Kidney (tissue), 22 donors: ENCODE measurements at regions of chr6 and their contacts with region 1.

Region 1: DNA sequence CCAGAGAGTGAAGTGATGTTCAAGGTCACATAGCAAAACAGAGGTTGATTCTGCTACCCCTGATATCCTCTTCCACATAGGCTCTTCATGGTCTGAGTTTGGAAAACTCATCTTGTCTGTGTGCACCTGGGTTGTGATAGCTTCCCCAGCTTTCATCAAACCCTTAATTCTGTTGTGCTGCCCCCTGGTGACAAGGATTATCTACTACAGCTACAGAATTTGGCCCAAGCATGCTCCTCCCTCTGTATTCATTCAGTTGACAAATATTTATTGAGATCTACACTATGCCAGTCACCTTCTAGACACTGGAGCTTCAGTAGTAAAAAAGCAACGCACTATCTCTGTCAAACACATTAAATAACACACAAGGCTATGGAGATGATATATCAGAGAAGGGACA is 50.4 kb downstream of the SMPDL3A start:
- DNase-seq: peak in 4 of 5 donors; percentile 58 to 80 (median 64)
- H3K4me3 ChIP-seq: no peak overlapping the region
- H3K27ac ChIP-seq: no peak overlapping the region
- H3K4me1 ChIP-seq: no peaks in the 10 kb centered on the region
- H3K27me3 ChIP-seq: no peaks in the 10 kb centered on the region
- CTCF ChIP-seq: peak; percentile 81

Region 2: DNA sequence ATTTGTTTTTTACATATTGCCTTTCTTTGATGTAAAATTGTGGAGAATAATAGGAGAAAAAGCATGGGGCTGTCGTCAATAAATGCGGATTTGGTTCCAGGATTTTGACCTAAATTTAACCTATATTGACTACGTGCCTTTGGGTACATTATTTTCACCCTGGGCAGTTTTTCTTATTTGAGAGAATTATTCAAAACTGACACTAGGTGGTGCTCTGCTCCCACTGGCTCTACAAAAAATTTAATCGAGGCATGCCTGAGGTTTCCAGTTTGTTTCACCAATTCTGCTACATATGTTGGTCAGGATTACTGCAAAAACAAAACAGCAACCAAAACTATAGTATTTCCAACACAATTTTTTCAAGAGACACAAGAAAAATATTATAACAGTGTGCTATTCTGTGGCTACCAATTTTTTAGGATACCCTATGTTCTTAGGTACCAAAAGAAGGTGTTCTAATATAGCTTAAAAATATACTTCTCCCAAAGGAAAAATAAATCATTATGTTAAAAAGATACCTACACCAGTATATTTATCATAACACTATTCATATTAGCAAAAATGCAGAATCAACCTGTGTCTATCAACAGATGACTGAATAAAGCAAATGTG is 108.6 kb before region 1 on chr6:
- intact Hi-C with region 1: loop called (anchors 5 kb)
- DNase-seq: peak in 3 of 5 donors; percentile 18 to 69 (median 62)
- H3K4me3 ChIP-seq: no peak overlapping the region
- H3K27ac ChIP-seq: no peak overlapping the region
- H3K4me1 ChIP-seq: no peaks in the 10 kb centered on the region
- H3K27me3 ChIP-seq: no peaks in the 10 kb centered on the region
- CTCF ChIP-seq: peak; percentile 67

Region 3: GRCh38 chr6:122903266-122903915 is 63.9 kb after region 1 on chr6:
- intact Hi-C with region 1: no loop called
- DNase-seq: no peak
- H3K4me3 ChIP-seq: no peak overlapping the region
- H3K27ac ChIP-seq: no peak overlapping the region
- H3K4me1 ChIP-seq: no peaks in the 10 kb centered on the region
- H3K27me3 ChIP-seq: no peaks in the 10 kb centered on the region
- CTCF ChIP-seq: no peak